PC-9 (cell line): ENCODE measurements at regions of chr9 and their contacts with region 1.

Region 1: DNA sequence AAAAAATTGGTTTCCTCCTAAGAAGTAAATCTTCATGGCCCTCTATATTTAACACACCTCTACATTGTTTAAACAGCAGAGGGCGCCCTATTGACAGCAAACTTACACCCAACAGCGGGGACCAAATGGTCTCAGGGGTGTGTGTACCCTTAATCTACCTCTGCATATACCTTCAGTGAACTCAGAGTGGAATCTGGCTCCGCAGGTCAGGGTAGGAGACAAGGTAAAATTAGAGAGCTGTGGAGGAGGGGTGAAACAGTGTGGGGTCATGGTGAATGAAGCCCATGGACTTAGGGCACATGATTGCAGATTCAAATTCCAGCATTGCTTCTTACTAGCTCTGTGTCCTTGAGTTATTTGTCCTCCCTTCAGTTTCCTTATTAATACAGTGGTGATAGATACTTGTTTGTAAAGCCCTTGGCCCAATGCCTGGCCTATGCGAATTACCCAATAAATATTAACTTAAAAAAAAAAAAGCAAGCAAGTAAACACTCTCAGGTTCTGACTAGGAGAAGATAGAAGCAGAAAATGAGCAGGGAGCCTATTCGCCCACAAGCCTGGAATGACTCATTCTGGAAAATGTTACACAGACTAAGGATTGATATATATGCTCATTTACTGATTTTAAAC is 122.9 kb downstream of the CAVIN4 start:
- DNase-seq: no peak
- H3K4me3 ChIP-seq: no peak overlapping the region
- H3K27ac ChIP-seq: no peak overlapping the region
- H3K4me1 ChIP-seq: no peaks in the 10 kb centered on the region
- H3K27me3 ChIP-seq: peaks cover 7% of the 10 kb centered on the region; the same call in 1 of the 2 replicates
- CTCF ChIP-seq: peak; percentile 63

Region 2: GRCh38 chr9:100959226-100959625 is 258.4 kb after region 1 on chr9:
- CTCF ChIA-PET with region 1: no interaction called
- POLR2A ChIA-PET with region 1: no interaction called
- intact Hi-C with region 1: no loop called
- DNase-seq: no peak
- H3K4me3 ChIP-seq: no peak overlapping the region
- H3K27ac ChIP-seq: no peak overlapping the region
- H3K4me1 ChIP-seq: no peaks in the 10 kb centered on the region
- H3K27me3 ChIP-seq: no peaks in the 10 kb centered on the region
- CTCF ChIP-seq: no peak

Region 3: GRCh38 chr9:101235105-101235866 is 534.5 kb after region 1 on chr9:
- CTCF ChIA-PET with region 1: no interaction called
- POLR2A ChIA-PET with region 1: no interaction called
- intact Hi-C with region 1: loop called (anchors 10 kb)
- DNase-seq: no peak
- H3K4me3 ChIP-seq: no peak overlapping the region
- H3K27ac ChIP-seq: no peak overlapping the region
- H3K4me1 ChIP-seq: no peaks in the 10 kb centered on the region
- H3K27me3 ChIP-seq: no peaks in the 10 kb centered on the region
- CTCF ChIP-seq: peak; percentile 64